PC-3 (cell line): ENCODE measurements at regions of chr11 and their contacts with region 1.

Region 1: DNA sequence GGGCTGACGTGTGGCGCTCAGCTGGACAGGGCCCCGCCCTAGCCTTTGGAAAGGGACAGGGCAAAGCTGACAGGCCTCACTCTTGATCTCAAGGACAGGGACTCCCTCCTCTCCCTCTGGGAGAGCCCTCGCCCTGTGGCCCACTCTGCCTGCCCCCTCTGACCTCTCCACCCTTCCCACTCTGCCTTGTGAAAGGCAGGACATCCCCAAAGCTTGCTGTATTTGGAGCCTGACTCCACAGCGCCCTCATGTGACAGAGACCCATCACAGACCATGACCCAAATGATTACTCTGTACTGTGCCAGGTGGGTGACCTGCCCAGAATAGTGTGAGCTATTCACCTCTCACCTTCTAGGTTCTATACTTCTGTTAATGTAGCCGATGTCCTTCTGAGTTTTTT is 18.8 kb downstream of the P2RY2 start:
- DNase-seq: peak; percentile 77
- ATAC-seq: peak; percentile 59
- H3K4me3 ChIP-seq: no peak overlapping the region
- H3K27ac ChIP-seq: no peak overlapping the region
- H3K4me1 ChIP-seq: peaks cover 38% of the 10 kb centered on the region
- H3K27me3 ChIP-seq: no peaks in the 10 kb centered on the region
- CTCF ChIP-seq: peak; percentile 95

Region 2: DNA sequence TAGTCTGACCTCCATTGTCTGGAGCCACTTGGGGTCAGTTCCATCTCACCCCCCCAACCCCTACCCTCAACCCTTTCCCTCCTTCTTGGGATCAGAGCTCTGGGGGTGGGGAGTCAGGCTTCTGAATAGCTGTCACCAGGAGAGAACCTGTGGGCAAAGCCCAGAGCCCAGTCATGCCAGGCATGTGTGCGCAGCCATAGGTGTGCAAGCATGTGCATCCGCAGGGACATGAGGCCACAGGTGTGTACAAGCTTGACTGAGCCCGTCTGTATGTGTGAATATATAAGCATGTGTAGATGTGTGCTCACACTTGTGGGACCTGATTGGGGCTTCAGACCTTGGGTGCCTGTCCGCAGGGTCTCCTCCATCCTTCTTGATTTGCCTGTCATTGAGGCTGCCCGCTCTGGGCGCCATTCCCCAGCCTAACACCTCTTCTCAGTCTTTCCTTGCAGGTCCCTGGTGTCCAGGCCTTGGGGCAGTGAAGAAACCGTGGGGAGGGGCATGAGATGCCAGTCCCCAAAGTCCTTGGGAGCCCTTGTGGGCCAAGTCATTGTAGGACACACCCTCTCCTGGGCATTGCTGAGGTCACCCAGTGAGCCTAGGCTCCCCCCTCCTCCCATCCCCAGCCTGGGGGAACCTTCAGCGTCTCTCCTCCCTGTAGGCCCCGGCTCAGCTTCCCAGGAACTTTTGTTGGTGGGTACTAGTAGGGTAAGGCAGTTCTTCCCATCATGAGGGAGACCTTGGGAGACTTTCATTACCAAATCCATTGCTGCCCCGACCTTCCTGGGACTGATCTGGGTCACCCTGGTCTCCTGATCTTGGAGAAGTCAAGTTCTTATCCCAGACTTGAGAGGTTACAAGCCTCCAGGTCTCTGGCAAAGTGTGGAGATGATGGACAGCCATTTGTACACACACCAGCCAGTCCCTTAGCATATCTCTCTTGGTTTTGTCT is 413.5 kb before region 1 on chr11:
- CTCF ChIA-PET with region 1: no interaction called
- POLR2A ChIA-PET with region 1: no interaction called
- intact Hi-C with region 1: loop called (anchors 2 kb)
- DNase-seq: peak; percentile 2
- ATAC-seq: no peak
- H3K4me3 ChIP-seq: no peak overlapping the region
- H3K27ac ChIP-seq: no peak overlapping the region
- H3K4me1 ChIP-seq: peaks cover 11% of the 10 kb centered on the region
- H3K27me3 ChIP-seq: no peaks in the 10 kb centered on the region
- CTCF ChIP-seq: no peak

Region 3: GRCh38 chr11:73195231-73195992 is 41.4 kb before region 1 on chr11:
- CTCF ChIA-PET with region 1: interaction called, 4 read pairs
- POLR2A ChIA-PET with region 1: no interaction called
- intact Hi-C with region 1: loop called (anchors 2 kb)
- DNase-seq: peak; percentile 99
- ATAC-seq: peak; percentile 79
- H3K4me3 ChIP-seq: peak overlapping the region; percentile 46
- H3K27ac ChIP-seq: peak overlapping the region; percentile 98
- H3K4me1 ChIP-seq: peaks cover 74% of the 10 kb centered on the region
- H3K27me3 ChIP-seq: no peaks in the 10 kb centered on the region
- CTCF ChIP-seq: peak; percentile 56

Region 4: DNA sequence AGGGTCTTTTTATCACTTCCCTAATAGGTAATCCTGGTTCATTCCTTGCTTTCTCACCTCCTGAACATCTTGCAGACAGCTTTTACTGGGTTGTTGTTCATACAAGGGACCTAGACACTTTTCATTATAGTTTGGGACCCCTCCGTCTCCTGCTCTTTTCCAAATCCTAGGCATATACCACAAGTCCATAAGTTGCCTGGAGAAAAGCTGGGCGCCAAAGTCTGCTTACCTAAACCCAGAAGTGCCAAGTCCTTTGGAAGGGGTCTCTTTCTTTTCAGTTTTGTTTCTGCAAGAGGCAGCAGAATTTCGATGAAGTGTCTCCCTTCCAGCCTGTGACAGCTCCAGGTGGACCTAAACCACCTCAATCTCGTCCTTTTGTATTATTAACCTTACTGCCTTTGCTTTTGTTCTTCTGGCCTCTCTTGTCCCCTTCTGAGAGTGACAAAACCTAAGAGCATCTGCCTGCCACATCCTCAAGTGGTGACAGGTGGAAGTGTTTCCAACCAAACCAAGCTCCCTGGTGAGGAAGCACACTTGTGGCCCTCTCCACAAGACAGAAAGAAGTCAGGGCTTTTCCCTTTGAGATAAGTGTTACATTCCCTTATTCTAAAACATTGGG is 15.8 kb after region 1 on chr11:
- CTCF ChIA-PET with region 1: no interaction called
- POLR2A ChIA-PET with region 1: no interaction called
- intact Hi-C with region 1: no loop called
- DNase-seq: peak; percentile 53
- ATAC-seq: peak; percentile 63
- H3K4me3 ChIP-seq: no peak overlapping the region
- H3K27ac ChIP-seq: no peak overlapping the region
- H3K4me1 ChIP-seq: peaks cover 10% of the 10 kb centered on the region
- H3K27me3 ChIP-seq: no peaks in the 10 kb centered on the region
- CTCF ChIP-seq: peak; percentile 42; the same call in 1 of the 2 replicates

Region 5: DNA sequence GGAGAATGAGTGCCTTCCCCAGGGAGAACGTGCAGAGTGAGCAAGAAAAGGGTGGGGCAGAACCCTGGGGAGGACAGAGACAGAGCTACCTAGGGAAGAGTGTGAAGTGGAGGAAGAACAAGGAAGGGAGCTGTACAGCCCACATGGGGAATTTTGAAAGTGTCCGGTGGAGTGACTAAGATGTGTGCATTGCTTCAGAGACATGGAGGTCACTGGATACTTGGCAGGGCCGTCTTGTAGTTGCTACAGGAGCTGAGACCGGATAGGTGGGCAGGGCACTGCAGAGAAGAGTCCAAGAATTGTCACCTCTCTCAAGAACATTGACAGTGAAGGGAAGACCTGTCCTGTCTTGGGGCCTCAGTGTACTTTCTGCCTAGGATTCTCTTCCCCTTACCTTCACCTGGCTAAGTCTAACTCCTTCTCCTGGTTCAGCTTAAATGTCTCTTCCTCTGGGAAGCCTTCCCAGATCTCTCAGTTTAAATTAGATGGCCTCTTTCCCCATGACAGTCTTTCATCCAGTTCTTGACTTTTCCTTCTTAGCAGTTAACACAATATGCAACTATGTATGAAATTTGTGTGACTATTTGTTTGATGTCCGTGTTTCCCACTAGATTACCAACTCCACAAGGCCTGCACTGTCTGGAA is 26.1 kb after region 1 on chr11:
- CTCF ChIA-PET with region 1: no interaction called
- POLR2A ChIA-PET with region 1: no interaction called
- intact Hi-C with region 1: no loop called
- DNase-seq: peak; percentile 66
- ATAC-seq: peak; percentile 72
- H3K4me3 ChIP-seq: no peak overlapping the region
- H3K27ac ChIP-seq: no peak overlapping the region
- H3K4me1 ChIP-seq: peaks cover 13% of the 10 kb centered on the region
- H3K27me3 ChIP-seq: no peaks in the 10 kb centered on the region
- CTCF ChIP-seq: no peak